Body of pancreas (tissue), 4 donors: ENCODE measurements at regions of chr11 and their contacts with region 1.

Region 1: DNA sequence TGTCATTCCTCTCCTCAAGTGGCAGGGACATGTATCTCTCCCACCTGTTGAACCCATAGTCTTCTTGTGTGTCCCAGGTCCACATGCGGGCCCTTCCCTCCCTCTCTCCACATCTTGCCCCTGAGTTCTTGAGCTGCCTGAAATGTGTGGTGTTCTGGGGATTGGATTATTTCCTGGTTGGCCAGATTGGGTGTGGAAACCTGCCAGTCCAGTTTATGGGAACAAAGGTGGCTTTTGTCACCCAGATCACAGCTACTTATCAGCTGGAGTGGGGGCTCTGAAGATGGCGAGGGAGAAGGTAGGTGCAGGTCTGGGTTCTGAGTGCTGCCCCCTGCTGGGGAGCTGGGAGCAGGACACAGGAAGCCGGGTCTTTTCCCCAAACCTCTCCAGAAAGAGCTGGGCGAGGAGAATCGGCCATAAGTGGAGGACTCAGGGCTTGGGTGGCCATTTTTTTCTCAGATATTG is 14.2 kb downstream of the DTX4 start:
- DNase-seq: peak; percentile 72 to 81 (median 76)
- ATAC-seq: peak; percentile 85
- H3K4me3 ChIP-seq: no peak overlapping the region
- H3K27ac ChIP-seq: peak overlapping the region; percentile 50 to 77 (median 68)
- H3K4me1 ChIP-seq: peaks cover 59% of the 10 kb centered on the region
- H3K27me3 ChIP-seq: no peaks in the 10 kb centered on the region
- CTCF ChIP-seq: peak; percentile 28 to 81 (median 70)
- POLR2A ChIP-seq: peak in 2 of 3 donors; percentile 27 to 34

Region 2: DNA sequence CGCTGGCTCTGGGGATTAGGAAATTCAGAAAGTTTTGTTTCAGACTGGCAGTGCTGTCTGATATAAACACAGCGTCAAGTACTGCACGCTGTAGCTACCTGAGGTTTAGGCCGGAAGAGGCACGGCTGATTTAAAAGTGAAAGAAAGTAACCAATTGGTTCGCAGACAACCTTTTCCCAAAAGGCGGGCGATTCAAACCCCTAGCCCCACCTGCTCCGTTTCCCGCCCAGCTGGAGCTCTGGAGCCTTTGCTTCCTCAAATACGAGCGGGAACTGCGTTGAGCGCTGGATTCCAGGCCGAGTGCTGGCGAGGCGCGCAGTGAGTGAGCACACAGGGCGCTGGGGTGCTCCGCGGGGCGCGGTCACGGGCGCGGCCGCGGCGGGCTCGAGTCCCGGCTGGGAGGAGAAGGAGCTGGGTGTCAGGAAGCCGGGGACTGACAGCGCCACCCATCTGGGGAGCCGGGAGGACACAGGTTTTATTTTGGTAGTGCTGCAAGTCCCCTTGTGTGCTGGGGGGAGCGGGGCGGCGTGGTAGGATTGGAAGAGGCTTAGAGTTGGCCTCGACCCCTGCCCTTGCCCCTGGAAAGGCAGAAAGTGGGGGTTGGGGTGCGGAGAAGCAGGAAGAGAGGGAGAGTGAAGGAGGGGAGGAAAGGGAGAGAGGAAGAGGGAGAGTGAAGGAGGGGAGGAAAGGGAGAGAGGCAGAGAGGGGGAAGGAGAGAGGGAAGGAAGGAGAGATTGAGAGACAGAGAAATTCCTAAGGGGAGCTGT is 41.4 kb before region 1 on chr11:
- intact Hi-C with region 1: no loop called
- DNase-seq: peak; percentile 77 to 88 (median 82)
- ATAC-seq: peak; percentile 63
- H3K4me3 ChIP-seq: peak overlapping the region in 1 of 2 donors; percentile 17
- H3K27ac ChIP-seq: peak overlapping the region; percentile 17 to 98 (median 91)
- H3K4me1 ChIP-seq: peaks cover 22% of the 10 kb centered on the region
- H3K27me3 ChIP-seq: no peaks in the 10 kb centered on the region
- CTCF ChIP-seq: no peak
- POLR2A ChIP-seq: peak in 2 of 3 donors; percentile 25

Region 3: DNA sequence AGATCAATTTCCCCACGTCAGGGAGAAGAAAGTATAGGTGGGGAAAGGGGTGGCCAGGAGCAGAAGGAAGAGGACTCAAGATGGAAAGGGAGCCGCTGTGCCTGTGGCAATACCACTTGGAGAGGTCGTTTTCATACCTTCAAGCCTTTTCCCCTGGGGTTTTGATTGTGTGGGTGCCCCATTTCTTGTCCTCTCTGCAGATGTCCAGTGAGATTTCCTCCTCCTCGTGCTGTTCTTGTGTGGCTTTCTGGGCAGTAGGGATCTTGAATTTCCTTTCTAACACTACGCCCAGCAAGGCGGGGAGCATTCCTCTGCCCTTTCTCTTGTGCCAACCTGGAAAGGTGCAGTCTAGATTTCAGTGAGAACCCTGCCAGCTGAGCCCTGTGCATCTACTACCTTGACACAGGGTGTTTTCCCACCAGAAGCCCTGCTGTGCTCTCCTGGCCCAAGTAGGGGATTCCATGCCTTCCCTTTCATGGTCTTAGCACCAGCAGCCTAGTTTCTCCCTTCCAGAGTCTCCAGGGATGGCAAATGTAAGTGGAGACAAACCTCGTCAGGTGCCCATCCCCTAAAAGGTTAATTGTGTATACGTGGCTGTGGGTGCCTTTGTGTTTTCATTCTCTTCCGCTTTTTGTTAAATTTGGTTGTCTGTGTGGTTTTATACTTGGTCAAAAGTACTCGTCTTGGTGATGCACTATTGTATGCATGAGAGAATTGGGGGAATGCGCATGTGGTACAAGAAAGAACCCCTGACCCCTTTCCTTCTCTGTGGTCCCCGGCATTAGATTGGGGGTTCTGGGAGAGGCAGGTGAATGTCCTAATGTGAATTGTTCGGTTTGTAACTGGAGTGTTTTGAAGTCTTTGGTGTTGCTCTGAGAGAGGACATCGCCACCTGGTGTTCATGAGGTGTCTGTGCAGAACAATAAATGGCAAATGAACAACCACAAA is 97.9 kb after region 1 on chr11:
- intact Hi-C with region 1: loop called (anchors 10 kb)
- DNase-seq: peak; percentile 48 to 63 (median 54)
- ATAC-seq: peak; percentile 73
- H3K4me3 ChIP-seq: no peak overlapping the region
- H3K27ac ChIP-seq: peak overlapping the region in 2 of 4 donors; percentile 14 to 15
- H3K4me1 ChIP-seq: peaks cover 32% of the 10 kb centered on the region
- H3K27me3 ChIP-seq: no peaks in the 10 kb centered on the region
- CTCF ChIP-seq: peak; percentile 45 to 82 (median 76)
- POLR2A ChIP-seq: no peak

Region 4: GRCh38 chr11:59534676-59535075 is 348.5 kb after region 1 on chr11:
- intact Hi-C with region 1: no loop called
- DNase-seq: no peak
- ATAC-seq: no peak
- H3K4me3 ChIP-seq: no peak overlapping the region
- H3K27ac ChIP-seq: no peak overlapping the region
- H3K4me1 ChIP-seq: peaks cover 7% of the 10 kb centered on the region
- H3K27me3 ChIP-seq: no peaks in the 10 kb centered on the region
- CTCF ChIP-seq: no peak
- POLR2A ChIP-seq: no peak

Region 5: DNA sequence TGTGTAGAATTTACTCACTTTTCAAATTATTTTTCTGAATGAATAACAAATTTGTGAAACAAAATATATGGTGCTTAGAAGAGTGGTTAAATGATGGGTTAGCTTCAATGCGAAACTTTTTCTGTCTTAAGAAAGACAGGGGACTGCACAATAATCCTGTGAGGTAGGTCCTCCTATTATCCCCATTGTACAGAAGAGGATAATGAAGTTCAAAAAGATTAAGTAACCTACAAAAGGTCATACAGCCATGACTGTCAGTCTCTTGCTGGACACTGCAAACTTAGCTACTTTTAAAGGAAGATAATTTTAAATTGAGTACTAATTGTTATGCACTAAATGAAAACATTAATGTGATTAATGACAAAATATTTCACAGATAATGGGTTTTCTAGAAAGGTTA is 697.4 kb after region 1 on chr11:
- intact Hi-C with region 1: no loop called
- DNase-seq: no peak
- ATAC-seq: no peak
- H3K4me3 ChIP-seq: no peak overlapping the region
- H3K27ac ChIP-seq: no peak overlapping the region
- H3K4me1 ChIP-seq: no peaks in the 10 kb centered on the region
- H3K27me3 ChIP-seq: no peaks in the 10 kb centered on the region
- CTCF ChIP-seq: no peak
- POLR2A ChIP-seq: no peak